MCF 10A (cell line): ENCODE measurements at regions of chr15 and their contacts with region 1.

Region 1: GRCh38 chr15:30870681-30871080 is 33.0 kb upstream of the FAN1 start:
- DNase-seq: no peak
- H3K4me3 Mint-ChIP-seq: no peak overlapping the region
- H3K27ac Mint-ChIP-seq: no peak overlapping the region
- H3K4me1 Mint-ChIP-seq: no peaks in the 10 kb centered on the region
- H3K27me3 Mint-ChIP-seq: no peaks in the 10 kb centered on the region
- CTCF ChIP-seq: no peak

Region 2: GRCh38 chr15:30859091-30859874 is 11.4 kb before region 1 on chr15:
- CTCF ChIA-PET with region 1: interaction called, 25 read pairs
- POLR2A ChIA-PET with region 1: no interaction called
- intact Hi-C with region 1: loop called (anchors 1 kb)
- DNase-seq: peak; percentile 35
- H3K4me3 Mint-ChIP-seq: no peak overlapping the region
- H3K27ac Mint-ChIP-seq: no peak overlapping the region
- H3K4me1 Mint-ChIP-seq: no peaks in the 10 kb centered on the region
- H3K27me3 Mint-ChIP-seq: no peaks in the 10 kb centered on the region
- CTCF ChIP-seq: peak; percentile 47

Region 3: DNA sequence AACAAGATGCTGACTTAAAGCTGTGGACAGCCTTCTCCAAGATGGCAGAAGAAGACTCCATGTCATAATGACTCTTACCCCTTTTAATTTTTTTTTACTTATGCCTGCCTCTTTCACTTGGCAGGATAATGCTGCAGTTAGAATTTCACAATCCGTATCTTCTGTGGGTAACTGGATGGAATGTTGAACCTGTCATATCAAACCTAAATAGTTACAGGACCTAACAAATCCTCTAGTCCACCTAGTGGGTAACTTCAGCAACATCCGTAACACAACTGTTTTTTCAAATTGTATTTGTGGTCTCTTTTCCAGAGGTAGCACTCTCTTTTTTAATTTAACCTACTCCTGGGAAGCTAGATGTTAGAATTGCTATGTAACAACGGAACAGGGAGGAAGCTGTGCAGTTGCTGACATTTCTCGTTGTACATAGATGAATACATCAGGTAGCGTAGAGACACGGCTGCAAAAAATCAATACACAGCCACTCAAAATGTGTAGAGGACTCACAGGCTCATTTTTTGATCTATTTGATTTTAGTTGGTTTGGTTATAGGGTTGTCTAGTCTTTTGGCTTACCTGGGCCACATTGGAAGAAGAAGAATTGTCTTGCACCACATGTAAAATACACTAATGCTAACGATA is 274.7 kb after region 1 on chr15:
- CTCF ChIA-PET with region 1: no interaction called
- POLR2A ChIA-PET with region 1: no interaction called
- intact Hi-C with region 1: no loop called
- DNase-seq: peak; percentile 34
- H3K4me3 Mint-ChIP-seq: no peak overlapping the region
- H3K27ac Mint-ChIP-seq: no peak overlapping the region
- H3K4me1 Mint-ChIP-seq: peaks cover 11% of the 10 kb centered on the region
- H3K27me3 Mint-ChIP-seq: no peaks in the 10 kb centered on the region
- CTCF ChIP-seq: no peak